Activated CD8-positive, alpha-beta T cell treated with anti-CD3 and anti-CD28 coated beads for 36 hours (primary cell): ENCODE measurements at regions of chr22 and their contacts with region 1.

Region 1: DNA sequence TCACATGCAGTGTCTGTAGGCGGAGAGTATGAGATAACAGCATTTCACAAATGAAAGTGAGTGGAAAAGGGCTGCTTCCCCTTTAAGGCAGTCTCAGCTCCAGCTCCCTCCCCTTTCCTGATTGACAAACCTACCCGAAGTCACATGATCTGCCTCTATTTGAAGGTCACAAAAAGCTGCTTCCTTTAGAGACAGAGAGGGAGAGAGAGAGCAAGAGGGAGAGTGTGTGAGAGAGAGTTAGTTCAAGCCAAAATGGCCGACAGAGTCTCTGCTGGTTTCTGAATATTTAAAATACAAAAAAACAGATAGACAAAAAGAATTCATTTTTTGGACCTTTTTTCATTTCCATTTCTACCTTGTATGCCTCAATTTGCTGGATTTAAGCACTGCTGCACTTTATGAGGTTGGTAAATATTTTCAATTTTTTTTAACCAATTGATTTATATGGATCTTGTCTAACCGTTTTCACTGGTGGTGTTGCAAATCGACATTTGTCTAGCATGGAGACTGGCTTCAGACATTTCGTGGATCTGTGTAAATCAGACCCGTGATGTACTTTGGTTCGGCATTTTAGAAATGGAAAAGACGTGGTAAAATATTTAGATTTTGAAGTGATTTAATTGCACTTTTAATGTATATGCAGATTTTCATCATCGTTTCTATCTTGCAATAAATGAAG is at the start of gene TNRC6B:
- DNase-seq: peak; percentile 84
- ATAC-seq: peak; percentile 75
- H3K4me3 Mint-ChIP-seq: peak within 1 kb of the TSS; percentile 89
- H3K27ac Mint-ChIP-seq: peak within 1 kb of the TSS; percentile 92
- H3K4me1 Mint-ChIP-seq: peaks cover 49% of the 10 kb centered on the region
- H3K27me3 Mint-ChIP-seq: no peaks in the 10 kb centered on the region
- CTCF ChIP-seq: no peak
- total RNA-seq, gene TNRC6B: 42.6 to 45.2 TPM

Region 2: GRCh38 chr22:40044102-40044869 is 133.6 kb before region 1 on chr22:
- CTCF ChIA-PET with region 1: interaction called, 11 read pairs
- POLR2A ChIA-PET with region 1: interaction called, 56 read pairs
- intact Hi-C with region 1: loop called (anchors 1 kb)
- DNase-seq: peak; percentile 99
- ATAC-seq: peak; percentile 88
- H3K4me3 Mint-ChIP-seq: peak overlapping the region; percentile 87
- H3K27ac Mint-ChIP-seq: peak overlapping the region; percentile 99
- H3K4me1 Mint-ChIP-seq: peaks cover 26% of the 10 kb centered on the region
- H3K27me3 Mint-ChIP-seq: no peaks in the 10 kb centered on the region
- CTCF ChIP-seq: no peak

Region 3: GRCh38 chr22:40055143-40055883 is 122.6 kb before region 1 on chr22:
- CTCF ChIA-PET with region 1: interaction called, 3 read pairs
- POLR2A ChIA-PET with region 1: interaction called, 25 read pairs
- intact Hi-C with region 1: loop called (anchors 5 kb)
- DNase-seq: peak; percentile 50
- ATAC-seq: peak; percentile 86
- H3K4me3 Mint-ChIP-seq: peak overlapping the region; percentile 74
- H3K27ac Mint-ChIP-seq: peak overlapping the region; percentile 95
- H3K4me1 Mint-ChIP-seq: peaks cover 78% of the 10 kb centered on the region
- H3K27me3 Mint-ChIP-seq: no peaks in the 10 kb centered on the region
- CTCF ChIP-seq: no peak

Region 4: GRCh38 chr22:40193429-40194421 is 15.8 kb after region 1 on chr22:
- CTCF ChIA-PET with region 1: interaction called, 44 read pairs
- POLR2A ChIA-PET with region 1: interaction called, 62 read pairs
- intact Hi-C with region 1: loop called (anchors 2 kb)
- DNase-seq: peak; percentile 36
- ATAC-seq: no peak
- H3K4me3 Mint-ChIP-seq: no peak overlapping the region
- H3K27ac Mint-ChIP-seq: peak overlapping the region; percentile 78
- H3K4me1 Mint-ChIP-seq: peaks cover 74% of the 10 kb centered on the region
- H3K27me3 Mint-ChIP-seq: no peaks in the 10 kb centered on the region
- CTCF ChIP-seq: peak; percentile 27

Region 5: GRCh38 chr22:40238425-40239344 is 60.8 kb after region 1 on chr22:
- CTCF ChIA-PET with region 1: no interaction called
- POLR2A ChIA-PET with region 1: interaction called, 28 read pairs
- intact Hi-C with region 1: loop called (anchors 5 kb)
- DNase-seq: no peak
- ATAC-seq: no peak
- H3K4me3 Mint-ChIP-seq: peak overlapping the region; percentile 6
- H3K27ac Mint-ChIP-seq: peak overlapping the region; percentile 63
- H3K4me1 Mint-ChIP-seq: peaks cover 75% of the 10 kb centered on the region
- H3K27me3 Mint-ChIP-seq: no peaks in the 10 kb centered on the region
- CTCF ChIP-seq: no peak

Region 6: DNA sequence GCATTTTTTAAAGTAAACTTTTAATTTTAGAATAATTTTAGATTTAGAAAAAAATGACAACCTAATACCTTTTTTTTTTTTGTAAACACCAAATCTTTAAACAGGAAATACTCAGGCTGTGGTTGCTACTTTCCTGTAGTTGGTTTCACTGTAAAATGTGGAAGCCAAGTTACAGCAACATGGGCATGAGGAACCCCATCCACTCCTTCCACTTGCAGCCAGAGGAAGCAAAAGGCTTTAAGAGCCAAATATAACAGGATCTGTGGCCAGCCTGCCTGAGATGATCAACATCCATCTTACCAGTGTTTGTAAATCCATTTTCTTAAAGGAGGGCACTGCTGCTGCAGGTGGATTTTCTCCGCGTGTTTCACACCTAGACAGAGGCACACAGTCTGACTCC is 66.0 kb after region 1 on chr22:
- CTCF ChIA-PET with region 1: no interaction called
- POLR2A ChIA-PET with region 1: interaction called, 28 read pairs
- intact Hi-C with region 1: loop called (anchors 5 kb)
- DNase-seq: no peak
- ATAC-seq: no peak
- H3K4me3 Mint-ChIP-seq: no peak overlapping the region
- H3K27ac Mint-ChIP-seq: peak overlapping the region; percentile 43
- H3K4me1 Mint-ChIP-seq: peaks cover 73% of the 10 kb centered on the region
- H3K27me3 Mint-ChIP-seq: no peaks in the 10 kb centered on the region
- CTCF ChIP-seq: no peak

Region 7: GRCh38 chr22:40326905-40327735 is 149.2 kb after region 1 on chr22:
- CTCF ChIA-PET with region 1: no interaction called
- POLR2A ChIA-PET with region 1: interaction called, 12 read pairs
- intact Hi-C with region 1: no loop called
- DNase-seq: peak; percentile 29
- ATAC-seq: peak; percentile 9
- H3K4me3 Mint-ChIP-seq: peak overlapping the region; percentile 22
- H3K27ac Mint-ChIP-seq: peak overlapping the region; percentile 87
- H3K4me1 Mint-ChIP-seq: peaks cover 93% of the 10 kb centered on the region
- H3K27me3 Mint-ChIP-seq: no peaks in the 10 kb centered on the region
- CTCF ChIP-seq: no peak